ENCODE measurements at regions of chr9 and their contacts with region 1.

Region 1: GRCh38 chr9:34500623-34501267 is 22.0 kb downstream of the ENHO start:
- DNase-seq: peak; percentile 50 to 93
- H3K4me3 ChIP-seq: no peak overlapping the region
- CTCF ChIP-seq: peak in 1 of 3 donors; percentile 93
- POLR2A ChIP-seq: no peak

Region 2: DNA sequence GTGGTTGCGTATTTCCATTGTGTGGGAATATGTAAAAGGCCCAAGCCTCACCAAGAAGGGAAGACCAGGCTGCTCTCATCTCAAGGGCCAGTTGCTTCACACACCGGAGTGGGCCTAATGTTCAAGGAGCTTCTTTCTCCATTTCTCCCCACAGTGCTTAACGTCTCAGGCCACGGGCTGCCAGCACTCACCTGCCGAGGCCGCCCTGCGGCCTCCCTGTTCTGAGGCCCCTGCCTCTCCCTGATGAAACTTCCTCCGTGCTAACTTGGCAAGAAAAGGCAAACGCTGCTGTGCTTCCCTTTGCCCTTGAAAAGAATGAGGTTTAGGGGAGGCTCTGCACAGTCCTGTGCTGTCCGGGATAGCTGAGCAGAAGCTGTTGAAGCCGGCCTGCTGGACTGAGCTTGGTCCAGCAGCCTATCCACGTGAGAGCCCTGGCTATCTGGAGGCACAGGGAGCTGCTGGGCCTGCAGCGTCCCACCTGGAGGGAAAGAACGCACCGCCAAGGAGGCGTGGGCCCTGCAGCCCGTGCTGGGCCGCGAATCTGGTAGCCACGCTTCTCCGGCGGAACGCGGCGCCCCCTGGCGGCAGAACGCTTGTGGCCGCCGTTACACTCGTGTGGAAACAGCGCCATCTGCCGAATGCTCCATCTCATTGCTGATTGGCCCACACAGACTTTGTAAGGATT is 778.9 kb before region 1 on chr9:
- intact Hi-C with region 1: no loop called
- DNase-seq: peak; percentile 76 to 95
- H3K4me3 ChIP-seq: no peak overlapping the region
- CTCF ChIP-seq: peak in 1 of 3 donors; percentile 96
- POLR2A ChIP-seq: no peak

Region 3: DNA sequence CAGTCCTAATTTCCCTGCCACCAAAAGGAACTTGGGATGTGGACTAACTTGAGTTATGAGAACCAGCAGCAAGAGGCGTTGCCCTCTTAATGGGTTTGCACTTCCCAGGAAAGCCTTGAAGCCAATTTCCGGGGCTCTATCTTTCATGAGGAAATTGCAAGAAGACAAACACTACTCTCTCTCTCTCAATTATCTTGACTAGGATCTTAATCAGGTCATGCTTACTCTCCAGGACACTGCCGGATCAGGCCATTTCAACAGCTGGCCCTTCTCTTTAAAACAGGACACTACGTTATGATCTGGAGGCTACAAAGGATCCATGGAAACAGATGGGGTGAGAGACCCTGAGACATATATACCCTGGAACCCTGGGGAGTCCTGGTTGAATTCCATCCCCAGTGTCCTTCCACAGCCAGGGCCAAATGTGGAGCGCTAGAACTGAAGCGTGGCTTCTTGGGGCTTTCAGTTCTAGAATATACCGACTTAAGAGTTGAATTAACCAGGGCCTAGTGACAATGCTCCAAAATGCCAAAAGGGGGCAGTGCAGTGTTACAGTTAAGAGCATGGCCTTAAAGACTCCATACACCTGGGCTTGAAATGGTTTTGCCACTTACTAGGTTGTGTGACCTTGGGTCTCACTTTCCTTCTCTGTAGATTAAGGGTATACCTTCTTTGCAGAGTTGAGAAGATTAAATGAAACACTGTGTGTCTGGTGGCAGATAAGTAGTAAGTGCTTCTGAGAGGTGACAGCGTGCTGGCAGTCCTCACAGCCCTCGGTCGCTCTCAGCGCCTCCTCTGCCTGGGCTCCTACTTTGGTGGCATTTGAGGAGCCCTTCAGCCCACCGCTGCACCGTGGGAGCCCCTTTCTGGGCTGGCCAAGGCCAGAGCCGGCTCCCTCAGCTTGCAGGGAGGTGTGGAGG is 63.5 kb before region 1 on chr9:
- intact Hi-C with region 1: loop called (anchors 5 kb)
- DNase-seq: peak in 1 of 2 donors; percentile 31
- H3K4me3 ChIP-seq: no peak overlapping the region
- CTCF ChIP-seq: peak in 1 of 3 donors; percentile 34
- POLR2A ChIP-seq: no peak

Region 4: GRCh38 chr9:34684145-34684544 is 183.4 kb after region 1 on chr9:
- intact Hi-C with region 1: loop called (anchors 5 kb)
- DNase-seq: no peak
- H3K4me3 ChIP-seq: no peak overlapping the region
- CTCF ChIP-seq: no peak
- POLR2A ChIP-seq: no peak